Calu3 (cell line): ENCODE measurements at regions of chr7 and their contacts with region 1.

Region 1: GRCh38 chr7:34747867-34748727 is 90.1 kb downstream of the NPSR1 start:
- DNase-seq: peak; percentile 97
- H3K4me3 Mint-ChIP-seq: peak overlapping the region; percentile 31
- H3K27ac Mint-ChIP-seq: peak overlapping the region; percentile 70
- H3K4me1 Mint-ChIP-seq: peaks cover 66% of the 10 kb centered on the region
- H3K27me3 Mint-ChIP-seq: no peaks in the 10 kb centered on the region
- CTCF ChIP-seq: no peak

Region 2: GRCh38 chr7:34655384-34655783 is 92.7 kb before region 1 on chr7:
- CTCF ChIA-PET with region 1: interaction called, 3 read pairs
- intact Hi-C with region 1: loop called (anchors 1 kb)
- DNase-seq: peak; percentile 48
- H3K4me3 Mint-ChIP-seq: peak overlapping the region; percentile 52
- H3K27ac Mint-ChIP-seq: peak overlapping the region; percentile 75
- H3K4me1 Mint-ChIP-seq: peaks cover 63% of the 10 kb centered on the region
- H3K27me3 Mint-ChIP-seq: no peaks in the 10 kb centered on the region
- CTCF ChIP-seq: no peak

Region 3: GRCh38 chr7:34675749-34676374 is 72.2 kb before region 1 on chr7:
- CTCF ChIA-PET with region 1: no interaction called
- intact Hi-C with region 1: loop called (anchors 2 kb)
- DNase-seq: peak; percentile 66
- H3K4me3 Mint-ChIP-seq: no peak overlapping the region
- H3K27ac Mint-ChIP-seq: no peak overlapping the region
- H3K4me1 Mint-ChIP-seq: peaks cover 24% of the 10 kb centered on the region
- H3K27me3 Mint-ChIP-seq: no peaks in the 10 kb centered on the region
- CTCF ChIP-seq: peak; percentile 85

Region 4: GRCh38 chr7:34759452-34760125 is 11.5 kb after region 1 on chr7:
- CTCF ChIA-PET with region 1: interaction called, 10 read pairs
- intact Hi-C with region 1: no loop called
- DNase-seq: peak; percentile 53
- H3K4me3 Mint-ChIP-seq: no peak overlapping the region
- H3K27ac Mint-ChIP-seq: no peak overlapping the region
- H3K4me1 Mint-ChIP-seq: peaks cover 40% of the 10 kb centered on the region
- H3K27me3 Mint-ChIP-seq: no peaks in the 10 kb centered on the region
- CTCF ChIP-seq: peak; percentile 82

Region 5: DNA sequence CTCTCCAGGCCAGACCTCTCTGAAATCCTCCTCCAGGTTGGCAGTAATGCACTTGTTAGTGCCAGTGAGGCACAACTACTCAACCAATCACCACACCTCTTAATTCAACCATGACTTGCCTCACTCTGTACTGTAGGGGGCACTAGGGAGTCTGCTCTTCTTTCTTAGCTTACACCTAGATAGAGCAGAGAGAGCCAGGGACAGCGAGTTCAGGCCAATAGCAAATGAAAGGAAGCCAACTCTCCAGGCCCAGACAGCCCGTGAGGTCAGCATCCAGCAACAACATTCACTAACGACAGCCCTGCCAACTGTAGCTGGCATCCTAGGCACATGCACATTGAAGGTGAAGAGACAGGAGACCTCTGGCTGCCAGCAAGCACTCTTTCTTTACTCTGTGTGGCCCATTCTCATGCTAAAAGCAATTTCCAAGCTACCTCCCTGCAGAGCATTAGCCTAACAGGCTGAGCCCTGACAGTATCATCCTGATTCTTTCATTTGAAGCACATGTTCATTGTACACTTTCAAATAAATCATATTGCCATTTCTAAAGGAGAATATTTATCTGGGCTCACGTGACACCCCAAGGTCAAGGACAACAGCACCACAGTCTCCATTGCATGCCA is 152.9 kb after region 1 on chr7:
- CTCF ChIA-PET with region 1: no interaction called
- intact Hi-C with region 1: loop called (anchors 1 kb)
- DNase-seq: no peak
- H3K4me3 Mint-ChIP-seq: no peak overlapping the region
- H3K27ac Mint-ChIP-seq: no peak overlapping the region
- H3K4me1 Mint-ChIP-seq: no peaks in the 10 kb centered on the region
- H3K27me3 Mint-ChIP-seq: no peaks in the 10 kb centered on the region
- CTCF ChIP-seq: peak; percentile 47